HCT116 (cell line): ENCODE measurements at regions of chr17 and their contacts with region 1.

Region 1: DNA sequence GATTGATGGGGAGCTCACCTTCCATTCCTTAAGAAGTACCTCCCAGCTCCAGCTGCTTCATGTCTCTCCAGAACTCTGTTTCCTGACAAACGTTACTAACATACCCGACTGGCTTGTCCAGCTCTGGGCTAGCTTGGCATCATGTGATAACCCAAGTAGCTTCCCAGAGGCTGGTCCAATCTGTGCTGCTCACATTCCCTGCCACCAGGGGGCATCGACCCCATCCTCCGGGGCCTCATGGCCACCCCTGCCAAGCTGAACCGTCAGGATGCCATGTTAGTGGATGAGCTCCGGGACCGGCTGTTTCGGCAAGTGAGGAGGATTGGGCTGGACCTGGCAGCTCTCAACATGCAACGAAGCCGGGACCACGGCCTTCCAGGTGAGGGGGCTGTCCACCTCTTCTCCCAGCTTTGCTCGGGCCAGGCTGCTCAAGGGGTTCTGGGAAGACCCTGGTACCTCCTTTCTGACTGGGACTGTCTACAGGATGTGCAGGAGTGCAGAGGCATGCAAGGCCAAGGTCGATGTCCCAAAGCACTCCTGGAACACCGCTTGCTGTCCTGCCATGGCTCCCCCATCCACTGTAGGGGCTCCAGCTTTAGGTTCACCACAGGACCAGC is 7.6 kb downstream of the EPX start:
- DNase-seq: peak; percentile 63
- ATAC-seq: peak; percentile 98
- H3K4me3 ChIP-seq: no peak overlapping the region
- H3K27ac ChIP-seq: no peak overlapping the region
- H3K4me1 ChIP-seq: peaks cover 0 to 3% of the 10 kb centered on the region in 2 experiments; a peak in 1 of 4 replicates
- H3K27me3 ChIP-seq: no peaks in the 10 kb centered on the region; the same call in 1 of the 2 replicates
- CTCF ChIP-seq: peak; percentile 58 to 90 (median 88)
- POLR2A ChIP-seq: no peak
- RAD21 ChIP-seq: no peak; the same call in 1 of the 2 replicates

Region 2: GRCh38 chr17:58189436-58190146 is 10.5 kb before region 1 on chr17:
- CTCF ChIA-PET with region 1: interaction called, 30 read pairs
- POLR2A ChIA-PET with region 1: interaction called, 3 read pairs
- RAD21 ChIA-PET with region 1: no interaction called
- intact Hi-C with region 1: no loop called
- DNase-seq: peak; percentile 47
- ATAC-seq: peak; percentile 86
- H3K4me3 ChIP-seq: no peak overlapping the region
- H3K27ac ChIP-seq: no peak overlapping the region
- H3K4me1 ChIP-seq: peaks cover 9 to 22% of the 10 kb centered on the region in 2 experiments
- H3K27me3 ChIP-seq: no peaks in the 10 kb centered on the region
- CTCF ChIP-seq: no peak
- POLR2A ChIP-seq: no peak
- RAD21 ChIP-seq: no peak

Region 3: GRCh38 chr17:58210922-58211321 is 10.8 kb after region 1 on chr17:
- CTCF ChIA-PET with region 1: interaction called, 36 read pairs
- POLR2A ChIA-PET with region 1: interaction called, 10 read pairs
- RAD21 ChIA-PET with region 1: interaction called in 1 of 2 experiments, 5 read pairs
- intact Hi-C with region 1: no loop called
- DNase-seq: no peak
- ATAC-seq: peak; percentile 57; the same call in 1 of the 2 replicates
- H3K4me3 ChIP-seq: no peak overlapping the region
- H3K27ac ChIP-seq: no peak overlapping the region
- H3K4me1 ChIP-seq: no peaks in the 10 kb centered on the region
- H3K27me3 ChIP-seq: no peaks in the 10 kb centered on the region
- CTCF ChIP-seq: peak in 2 of 3 experiments; percentile 47 to 49; a peak in 4 of 6 replicates
- POLR2A ChIP-seq: no peak
- RAD21 ChIP-seq: no peak; the same call in 1 of the 2 replicates

Region 4: GRCh38 chr17:58219001-58219788 is 19.1 kb after region 1 on chr17 and contains the start of gene MKS1:
- CTCF ChIA-PET with region 1: interaction called, 36 read pairs
- POLR2A ChIA-PET with region 1: interaction called, 10 read pairs
- RAD21 ChIA-PET with region 1: interaction called in 1 of 2 experiments, 5 read pairs
- intact Hi-C with region 1: loop called (anchors 1 kb)
- DNase-seq: peak; percentile 87
- ATAC-seq: peak; percentile 98
- H3K4me3 ChIP-seq: peak within 1 kb of the TSS; percentile 66 to 87
- H3K27ac ChIP-seq: peak within 1 kb of the TSS; percentile 30
- H3K4me1 ChIP-seq: peaks cover 8 to 20% of the 10 kb centered on the region in 2 experiments; a peak in 3 of 4 replicates
- H3K27me3 ChIP-seq: no peaks in the 10 kb centered on the region
- CTCF ChIP-seq: peak in 2 of 3 experiments; percentile 64 to 79; a peak in 4 of 6 replicates
- POLR2A ChIP-seq: peak; percentile 89
- RAD21 ChIP-seq: no peak
- total RNA-seq, gene MKS1: 29.8 TPM